ENCODE measurements at regions of chr3 and their contacts with region 1.

Region 1: GRCh38 chr3:30426293-30426993 is 180.0 kb upstream of the TGFBR2 start:
- DNase-seq: peak; percentile 74
- ATAC-seq: peak; percentile 99 to 100

Region 2: GRCh38 chr3:30347679-30348216 is 78.7 kb before region 1 on chr3:
- intact Hi-C with region 1: loop called in 1 of 2 experiments (anchors 10 kb)
- DNase-seq: no peak
- ATAC-seq: peak in 1 of 2 donors; percentile 34

Measured in left cardiac atrium (tissue), 4 donors.